CD8-positive, alpha-beta memory T cell (primary cell): ENCODE measurements at regions of chr19 and their contacts with region 1.

Region 1: GRCh38 chr19:12696366-12697335 is at the start of gene FBXW9:
- DNase-seq: peak; percentile 91 to 98 (median 96)
- H3K4me3 ChIP-seq: peak within 1 kb of the TSS; percentile 58
- H3K4me3 Mint-ChIP-seq: peak within 1 kb of the TSS; percentile 87 to 98 (median 92)
- H3K27ac ChIP-seq: peak within 1 kb of the TSS; percentile 79
- H3K27ac Mint-ChIP-seq: peak within 1 kb of the TSS; percentile 93 to 99 (median 96)
- H3K4me1 ChIP-seq: peaks cover 12% of the 10 kb centered on the region
- H3K4me1 Mint-ChIP-seq: peaks cover 10 to 15% (median 12%) of the 10 kb centered on the region in 3 donors
- H3K27me3 ChIP-seq: no peaks in the 10 kb centered on the region
- H3K27me3 Mint-ChIP-seq: peaks cover 0 to 3% of the 10 kb centered on the region in 2 donors
- total RNA-seq, gene FBXW9: 7.9 to 8.1 TPM

Region 2: DNA sequence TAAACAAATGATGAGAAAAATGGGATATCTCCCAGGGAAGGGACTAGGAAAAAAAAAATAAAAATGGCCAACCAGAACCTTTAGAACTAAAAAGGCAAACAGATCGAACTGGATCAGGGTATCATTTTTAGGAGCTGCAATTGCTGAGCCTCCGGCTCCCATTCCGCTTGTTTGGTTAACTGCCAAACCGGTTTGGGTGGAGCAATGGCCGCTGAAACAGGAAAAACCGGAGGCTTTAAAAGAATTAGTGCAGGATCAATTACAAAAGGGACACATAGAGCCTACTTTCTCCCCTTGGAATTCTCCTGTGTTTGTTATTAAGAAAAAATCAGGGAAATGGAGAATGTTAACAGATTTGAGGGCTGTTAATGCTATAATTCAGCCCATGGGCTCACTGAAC is 243.2 kb before region 1 on chr19:
- CTCF ChIA-PET with region 1: no interaction called
- POLR2A ChIA-PET with region 1: no interaction called
- DNase-seq: no peak
- H3K4me3 ChIP-seq: no peak overlapping the region
- H3K4me3 Mint-ChIP-seq: no peak overlapping the region
- H3K27ac ChIP-seq: no peak overlapping the region
- H3K27ac Mint-ChIP-seq: no peak overlapping the region
- H3K4me1 ChIP-seq: no peaks in the 10 kb centered on the region
- H3K4me1 Mint-ChIP-seq: no peaks in the 10 kb centered on the region
- H3K27me3 ChIP-seq: no peaks in the 10 kb centered on the region
- H3K27me3 Mint-ChIP-seq: peaks cover 0 to 5% of the 10 kb centered on the region in 2 donors

Region 3: GRCh38 chr19:12731337-12731736 is 34.7 kb after region 1 on chr19:
- CTCF ChIA-PET with region 1: interaction called, 4 read pairs
- POLR2A ChIA-PET with region 1: interaction called, 11 read pairs
- DNase-seq: no peak
- H3K4me3 ChIP-seq: no peak overlapping the region
- H3K4me3 Mint-ChIP-seq: peak overlapping the region in 1 of 7 donors; percentile 48
- H3K27ac ChIP-seq: no peak overlapping the region
- H3K27ac Mint-ChIP-seq: no peak overlapping the region
- H3K4me1 ChIP-seq: peaks cover 25% of the 10 kb centered on the region
- H3K4me1 Mint-ChIP-seq: peaks cover 28 to 40% (median 30%) of the 10 kb centered on the region in 3 donors
- H3K27me3 ChIP-seq: no peaks in the 10 kb centered on the region
- H3K27me3 Mint-ChIP-seq: no peaks in the 10 kb centered on the region